ENCODE measurements at regions of chr1 and their contacts with region 1.

Region 1: DNA sequence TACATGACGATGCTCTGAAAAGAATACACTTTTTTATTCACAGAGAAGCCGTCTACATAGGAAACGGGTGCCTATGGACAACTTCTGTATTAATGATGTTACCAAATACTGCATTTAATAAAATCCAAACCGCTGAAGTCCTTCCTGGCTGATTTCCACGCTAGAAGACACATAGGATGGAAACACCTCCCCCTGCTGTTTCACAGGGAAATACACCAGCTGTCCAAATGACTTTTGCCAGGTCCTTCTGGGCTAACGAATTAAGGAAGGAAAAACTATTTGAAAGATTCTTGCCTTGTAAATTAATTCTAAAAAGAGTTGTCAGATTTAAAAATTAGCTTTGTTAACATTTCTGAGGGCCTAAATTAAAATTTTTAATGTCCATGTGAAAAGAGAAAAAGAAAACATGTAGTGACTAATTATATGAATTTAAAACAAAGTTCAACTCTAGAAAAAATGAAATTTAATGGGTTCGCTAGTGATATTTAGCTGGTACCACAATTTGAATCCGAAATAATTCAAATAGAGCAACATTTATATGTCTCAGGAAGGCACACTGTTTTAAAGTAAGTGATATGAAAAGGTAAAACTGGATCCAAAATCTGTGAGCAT is 146.0 kb downstream of the RERE start:
- DNase-seq: peak; percentile 61
- ATAC-seq: peak; percentile 40; the same call in 1 of the 3 replicates
- H3K4me3 ChIP-seq: peak overlapping the region in 2 of 3 experiments; percentile 1 to 37; a peak in 1 of 6 replicates
- H3K27ac ChIP-seq: peak overlapping the region; percentile 63
- H3K4me1 ChIP-seq: peaks cover 99% of the 10 kb centered on the region
- H3K27me3 ChIP-seq: no peaks in the 10 kb centered on the region
- CTCF ChIP-seq: peak; percentile 76
- EP300 ChIP-seq: no peak
- POLR2A ChIP-seq: no peak
- RAD21 ChIP-seq: peak; percentile 53

Region 2: GRCh38 chr1:8629241-8630091 is 41.9 kb before region 1 on chr1:
- CTCF ChIA-PET with region 1: no interaction called
- POLR2A ChIA-PET with region 1: no interaction called
- in situ Hi-C with region 1: no loop called
- intact Hi-C with region 1: loop called (anchors 5 kb)
- DNase-seq: peak; percentile 26
- ATAC-seq: peak; percentile 55
- H3K4me3 ChIP-seq: no peak overlapping the region
- H3K27ac ChIP-seq: no peak overlapping the region
- H3K4me1 ChIP-seq: peaks cover 65% of the 10 kb centered on the region
- H3K27me3 ChIP-seq: no peaks in the 10 kb centered on the region
- CTCF ChIP-seq: no peak
- EP300 ChIP-seq: no peak
- POLR2A ChIP-seq: no peak
- RAD21 ChIP-seq: no peak

Measured in HepG2 (cell line).